Endothelial cell of umbilical vein (primary cell): ENCODE measurements at regions of chr18 and their contacts with region 1.

Region 1: DNA sequence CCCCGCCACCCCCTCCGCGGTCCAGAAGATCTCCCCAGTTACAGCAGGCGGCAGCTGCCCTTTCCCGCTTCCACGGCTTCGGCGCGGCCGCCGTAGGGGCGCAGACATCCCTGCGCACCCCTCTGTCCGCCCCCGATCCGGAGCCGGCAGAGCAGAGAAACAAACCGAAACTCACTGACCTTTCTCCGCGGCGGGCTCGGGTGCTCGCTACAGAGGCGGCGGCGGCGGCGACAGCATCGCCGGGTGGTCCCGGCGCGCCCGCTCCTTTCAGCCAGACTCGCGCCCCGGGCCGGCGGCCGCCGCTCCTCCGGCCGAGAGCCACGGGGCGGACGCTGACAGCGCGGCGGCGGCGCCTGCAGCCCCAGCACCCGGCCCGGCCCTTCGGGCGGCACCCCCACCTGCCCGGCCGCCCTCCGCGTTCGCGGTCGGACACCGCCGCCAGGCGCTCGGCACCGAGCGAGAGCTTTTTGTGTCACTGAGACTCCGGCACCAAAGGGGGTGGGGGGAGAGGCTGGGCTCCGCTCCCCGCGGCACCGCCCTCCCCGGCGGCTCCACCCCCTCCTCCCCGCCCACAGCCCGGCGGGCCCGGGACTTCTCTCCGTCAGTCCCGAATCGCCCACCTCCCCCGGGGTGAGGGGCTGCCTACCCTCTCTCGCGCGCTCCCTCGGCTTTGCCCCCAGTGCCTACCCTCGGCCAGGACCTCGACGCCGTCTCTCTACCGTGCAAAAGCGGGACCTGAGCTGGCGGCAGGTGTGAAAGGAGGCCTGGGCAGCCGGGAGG is 1.4 kb upstream of the RNF152 start:
- DNase-seq: peak; percentile 82
- H3K4me3 ChIP-seq: peak overlapping the region; percentile 83 to 98 (median 87)
- H3K27ac ChIP-seq: peak overlapping the region; percentile 67
- H3K4me1 ChIP-seq: peaks cover 21% of the 10 kb centered on the region
- H3K27me3 ChIP-seq: no peaks in the 10 kb centered on the region
- CTCF ChIP-seq: peak in 1 of 2 donors; percentile 44
- POLR2A ChIP-seq: peak; percentile 82

Region 2: DNA sequence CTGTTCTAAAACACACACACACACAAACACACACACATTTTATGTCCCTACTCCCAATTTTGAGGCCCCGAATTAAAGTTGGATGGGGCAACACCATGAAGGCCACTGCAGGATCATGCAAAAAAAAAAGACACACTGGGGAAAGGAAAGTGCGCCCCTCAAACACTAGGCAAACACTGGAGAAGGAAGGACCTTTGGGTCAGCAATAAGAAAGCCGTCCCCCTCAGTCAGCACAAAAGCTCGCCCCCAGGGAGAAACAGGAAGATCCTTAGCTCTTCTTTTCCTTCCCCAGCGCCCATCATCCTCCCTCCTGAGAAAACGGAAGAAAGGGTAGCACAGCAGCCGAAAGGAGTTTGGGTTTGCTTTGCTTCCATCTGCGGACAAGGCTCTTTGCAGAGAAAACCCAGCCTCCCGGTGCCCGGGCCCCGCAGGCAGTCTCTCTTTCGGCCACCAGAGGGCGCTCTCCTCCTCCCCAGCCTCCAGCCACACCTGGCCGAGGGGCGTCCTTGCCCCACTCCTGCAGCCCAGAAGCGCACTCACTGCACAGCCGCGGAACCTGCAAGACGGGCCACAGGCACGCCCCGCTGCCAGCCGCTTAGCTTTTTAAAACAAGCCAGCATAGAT is 312.5 kb before region 1 on chr18:
- CTCF ChIA-PET with region 1: interaction called, 43 read pairs
- POLR2A ChIA-PET with region 1: interaction called, 3 read pairs
- dilution Hi-C with region 1: no loop called
- intact Hi-C with region 1: loop called (anchors 1 kb)
- DNase-seq: peak; percentile 77
- H3K4me3 ChIP-seq: peak overlapping the region; percentile 40 to 56 (median 54)
- H3K27ac ChIP-seq: peak overlapping the region; percentile 25
- H3K4me1 ChIP-seq: peaks cover 18% of the 10 kb centered on the region
- H3K27me3 ChIP-seq: no peaks in the 10 kb centered on the region
- CTCF ChIP-seq: peak; percentile 97
- POLR2A ChIP-seq: no peak

Region 3: DNA sequence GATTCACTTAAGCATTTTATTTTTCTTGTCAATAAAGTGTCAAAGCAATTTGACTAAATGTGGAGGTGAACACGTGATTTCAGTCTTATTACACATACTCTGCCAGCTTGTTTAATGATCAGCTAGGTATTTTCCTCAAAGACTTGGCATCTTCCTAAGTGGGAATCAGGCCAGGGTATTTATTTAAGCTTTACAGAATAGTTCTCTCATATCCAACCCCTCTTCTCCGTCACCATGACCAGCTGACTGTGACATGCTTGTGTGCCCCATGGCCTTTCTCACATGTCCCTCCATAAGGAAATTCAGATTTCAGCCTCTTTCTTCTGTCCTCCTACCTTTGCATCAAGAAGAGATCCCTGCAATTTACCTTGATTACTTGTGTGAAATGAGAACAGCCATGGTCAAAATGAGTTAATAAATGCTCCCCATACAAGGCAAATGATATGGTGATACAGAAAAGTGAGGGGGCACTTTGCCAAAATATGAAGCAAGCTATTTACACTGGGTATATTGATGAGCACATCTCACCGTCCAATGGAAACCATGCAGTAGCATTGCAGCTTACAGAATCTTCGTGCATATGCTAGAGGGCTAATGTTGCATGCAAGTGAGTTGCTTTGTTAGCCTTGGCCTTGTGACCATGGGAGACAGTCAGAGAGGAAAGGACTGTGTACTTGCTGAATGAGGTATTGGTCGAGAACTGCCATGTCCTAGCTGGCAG is 203.6 kb before region 1 on chr18:
- CTCF ChIA-PET with region 1: interaction called, 7 read pairs
- POLR2A ChIA-PET with region 1: interaction called, 3 read pairs
- dilution Hi-C with region 1: no loop called
- intact Hi-C with region 1: loop called (anchors 2 kb)
- DNase-seq: no peak
- H3K4me3 ChIP-seq: no peak overlapping the region
- H3K27ac ChIP-seq: no peak overlapping the region
- H3K4me1 ChIP-seq: peaks cover 16% of the 10 kb centered on the region
- H3K27me3 ChIP-seq: no peaks in the 10 kb centered on the region
- CTCF ChIP-seq: no peak
- POLR2A ChIP-seq: no peak

Region 4: GRCh38 chr18:61748004-61748403 is 146.2 kb before region 1 on chr18:
- CTCF ChIA-PET with region 1: no interaction called
- POLR2A ChIA-PET with region 1: interaction called, 4 read pairs
- dilution Hi-C with region 1: no loop called
- intact Hi-C with region 1: loop called (anchors 1 kb)
- DNase-seq: peak; percentile 88
- H3K4me3 ChIP-seq: no peak overlapping the region
- H3K27ac ChIP-seq: peak overlapping the region; percentile 88
- H3K4me1 ChIP-seq: peaks cover 23% of the 10 kb centered on the region
- H3K27me3 ChIP-seq: no peaks in the 10 kb centered on the region
- CTCF ChIP-seq: no peak
- POLR2A ChIP-seq: peak; percentile 45

Region 5: GRCh38 chr18:61865466-61866175 is 28.5 kb before region 1 on chr18:
- CTCF ChIA-PET with region 1: no interaction called
- POLR2A ChIA-PET with region 1: no interaction called
- dilution Hi-C with region 1: no loop called
- intact Hi-C with region 1: no loop called
- DNase-seq: no peak
- H3K4me3 ChIP-seq: no peak overlapping the region
- H3K27ac ChIP-seq: no peak overlapping the region
- H3K4me1 ChIP-seq: no peaks in the 10 kb centered on the region
- H3K27me3 ChIP-seq: no peaks in the 10 kb centered on the region
- CTCF ChIP-seq: no peak
- POLR2A ChIP-seq: no peak

Region 6: GRCh38 chr18:61998957-61999356 is 104.8 kb after region 1 on chr18:
- CTCF ChIA-PET with region 1: interaction called, 7 read pairs
- POLR2A ChIA-PET with region 1: no interaction called
- dilution Hi-C with region 1: no loop called
- intact Hi-C with region 1: loop called (anchors 2 kb)
- DNase-seq: peak; percentile 95
- H3K4me3 ChIP-seq: no peak overlapping the region
- H3K27ac ChIP-seq: peak overlapping the region; percentile 83
- H3K4me1 ChIP-seq: peaks cover 49% of the 10 kb centered on the region
- H3K27me3 ChIP-seq: no peaks in the 10 kb centered on the region
- CTCF ChIP-seq: no peak
- POLR2A ChIP-seq: no peak

Region 7: GRCh38 chr18:62437235-62438017 is 543.3 kb after region 1 on chr18:
- CTCF ChIA-PET with region 1: no interaction called
- POLR2A ChIA-PET with region 1: no interaction called
- dilution Hi-C with region 1: no loop called
- intact Hi-C with region 1: no loop called
- DNase-seq: peak; percentile 57
- H3K4me3 ChIP-seq: no peak overlapping the region
- H3K27ac ChIP-seq: peak overlapping the region; percentile 65
- H3K4me1 ChIP-seq: peaks cover 22% of the 10 kb centered on the region
- H3K27me3 ChIP-seq: no peaks in the 10 kb centered on the region
- CTCF ChIP-seq: no peak
- POLR2A ChIP-seq: no peak